ENCODE measurements at regions of chr12 and their contacts with region 1.

Region 1: DNA sequence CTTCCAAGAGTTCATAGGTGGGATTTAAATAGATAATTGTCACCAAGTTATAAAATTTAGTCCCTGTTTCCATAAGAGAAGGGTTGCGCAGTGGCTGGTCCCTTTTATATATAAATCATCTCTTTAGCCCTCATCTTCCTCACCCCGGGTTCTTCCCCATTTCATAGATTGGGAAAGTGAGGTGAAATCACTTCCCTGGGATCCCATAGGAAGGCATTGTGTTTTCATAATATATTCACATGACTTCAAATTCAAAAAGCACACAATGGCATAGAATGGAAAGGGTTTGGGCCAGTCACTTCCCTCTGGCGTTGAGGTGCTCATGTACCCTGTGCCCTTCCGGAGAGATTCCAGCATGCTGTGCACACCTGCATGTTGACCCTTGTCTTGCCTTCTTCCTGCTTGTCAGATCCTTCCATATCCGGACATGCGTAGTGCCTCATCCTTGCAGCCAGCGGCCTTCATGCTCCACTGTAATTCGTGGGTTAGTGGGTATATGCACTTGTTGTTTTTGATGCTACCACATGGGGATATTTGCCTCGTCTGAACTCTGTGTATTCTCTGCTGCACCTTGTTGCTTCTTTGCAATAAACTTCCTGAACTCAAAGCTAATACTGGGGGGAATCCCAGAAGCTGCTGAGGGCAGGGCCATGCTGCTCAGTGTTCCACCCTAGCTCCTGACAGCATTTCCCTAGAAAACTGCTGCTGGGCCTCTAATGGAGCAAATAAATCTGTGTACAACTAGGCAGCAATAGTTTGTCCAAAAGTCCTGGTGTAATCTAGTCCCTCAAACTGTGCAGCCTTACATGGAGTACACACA is 59.6 kb downstream of the ANAPC7 start:
- DNase-seq: no peak
- H3K4me3 ChIP-seq: no peak overlapping the region
- H3K27ac ChIP-seq: no peak overlapping the region
- H3K4me1 ChIP-seq: no peaks in the 10 kb centered on the region
- H3K27me3 ChIP-seq: no peaks in the 10 kb centered on the region
- CTCF ChIP-seq: no peak
- POLR2A ChIP-seq: no peak

Region 2: GRCh38 chr12:109875565-109876131 is 468.3 kb before region 1 on chr12:
- CTCF ChIA-PET with region 1: no interaction called
- POLR2A ChIA-PET with region 1: no interaction called
- dilution Hi-C with region 1: no loop called
- intact Hi-C with region 1: no loop called
- DNase-seq: no peak
- H3K4me3 ChIP-seq: no peak overlapping the region
- H3K27ac ChIP-seq: no peak overlapping the region
- H3K4me1 ChIP-seq: peaks cover 21% of the 10 kb centered on the region
- H3K27me3 ChIP-seq: no peaks in the 10 kb centered on the region
- CTCF ChIP-seq: no peak
- POLR2A ChIP-seq: no peak

Region 3: GRCh38 chr12:110224379-110225304 is 119.3 kb before region 1 on chr12:
- CTCF ChIA-PET with region 1: no interaction called
- POLR2A ChIA-PET with region 1: no interaction called
- dilution Hi-C with region 1: no loop called
- intact Hi-C with region 1: no loop called
- DNase-seq: peak; percentile 85
- H3K4me3 ChIP-seq: peak overlapping the region in 1 of 3 experiments; percentile 46
- H3K27ac ChIP-seq: no peak overlapping the region
- H3K4me1 ChIP-seq: peaks cover 6% of the 10 kb centered on the region
- H3K27me3 ChIP-seq: no peaks in the 10 kb centered on the region
- CTCF ChIP-seq: peak; percentile 43 to 53
- POLR2A ChIP-seq: no peak

Region 4: GRCh38 chr12:110330544-110330943 is 13.4 kb before region 1 on chr12:
- CTCF ChIA-PET with region 1: interaction called, 3 read pairs
- POLR2A ChIA-PET with region 1: no interaction called
- dilution Hi-C with region 1: no loop called
- intact Hi-C with region 1: loop called (anchors 2 kb)
- DNase-seq: no peak
- H3K4me3 ChIP-seq: no peak overlapping the region
- H3K27ac ChIP-seq: no peak overlapping the region
- H3K4me1 ChIP-seq: no peaks in the 10 kb centered on the region
- H3K27me3 ChIP-seq: no peaks in the 10 kb centered on the region
- CTCF ChIP-seq: no peak
- POLR2A ChIP-seq: no peak

Region 5: GRCh38 chr12:110403146-110403975 is 59.4 kb after region 1 on chr12 and contains the start of gene ANAPC7:
- CTCF ChIA-PET with region 1: no interaction called
- POLR2A ChIA-PET with region 1: no interaction called
- dilution Hi-C with region 1: no loop called
- intact Hi-C with region 1: no loop called
- DNase-seq: peak; percentile 92
- H3K4me3 ChIP-seq: peak within 1 kb of the TSS; percentile 49 to 84 (median 61)
- H3K27ac ChIP-seq: peak within 1 kb of the TSS; percentile 97
- H3K4me1 ChIP-seq: peaks cover 8% of the 10 kb centered on the region
- H3K27me3 ChIP-seq: no peaks in the 10 kb centered on the region
- CTCF ChIP-seq: no peak
- POLR2A ChIP-seq: peak; percentile 83
- total RNA-seq, gene ANAPC7: 76.6 and 89.0 TPM in 2 replicates